ENCODE measurements at regions of chr3 and their contacts with region 1.

Region 1: DNA sequence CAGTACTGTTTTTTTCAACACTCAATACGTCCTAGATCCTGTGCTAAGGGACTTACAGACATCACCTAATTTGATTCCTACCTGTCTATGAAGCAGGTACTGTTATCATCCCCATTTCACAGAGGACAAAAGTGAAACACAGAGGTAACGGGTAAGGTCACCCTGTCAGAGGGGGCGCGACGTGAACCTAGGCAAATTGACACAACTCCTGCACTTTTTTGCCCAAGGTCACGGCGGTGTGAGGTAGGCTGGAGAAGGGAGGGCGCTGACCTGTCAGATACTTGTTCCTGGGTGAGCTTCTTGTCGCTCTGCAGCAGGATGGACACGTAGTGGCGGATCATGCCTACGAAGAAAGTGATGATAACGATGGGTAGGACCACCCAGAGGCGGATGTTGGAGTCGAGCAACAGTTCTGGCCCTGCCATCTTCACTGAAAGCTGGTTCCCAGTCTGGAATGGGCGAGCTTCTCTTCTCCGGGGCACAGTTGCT is 360 bp downstream of the EMC3 start:
- DNase-seq: no peak
- ATAC-seq: peak; percentile 31
- H3K4me3 Mint-ChIP-seq: peak overlapping the region; percentile 94
- H3K27ac Mint-ChIP-seq: peak overlapping the region; percentile 98
- H3K4me1 Mint-ChIP-seq: peaks cover 32% of the 10 kb centered on the region
- H3K27me3 Mint-ChIP-seq: no peaks in the 10 kb centered on the region

Region 2: GRCh38 chr3:8963137-8963869 is 1023.0 kb before region 1 on chr3 and contains the start of gene RAD18:
- CTCF ChIA-PET with region 1: no interaction called
- POLR2A ChIA-PET with region 1: no interaction called
- intact Hi-C with region 1: loop called in 1 of 2 experiments (anchors 2 kb)
- DNase-seq: peak; percentile 95
- ATAC-seq: peak; percentile 94
- H3K4me3 Mint-ChIP-seq: peak within 1 kb of the TSS; percentile 95
- H3K27ac Mint-ChIP-seq: peak within 1 kb of the TSS; percentile 93
- H3K4me1 Mint-ChIP-seq: peaks cover 32% of the 10 kb centered on the region
- H3K27me3 Mint-ChIP-seq: no peaks in the 10 kb centered on the region
- total RNA-seq, gene RAD18: 47.8 to 50.5 TPM

Region 3: GRCh38 chr3:9415485-9416138 is 570.7 kb before region 1 on chr3:
- CTCF ChIA-PET with region 1: no interaction called
- POLR2A ChIA-PET with region 1: no interaction called
- intact Hi-C with region 1: no loop called
- DNase-seq: no peak
- ATAC-seq: peak; percentile 16
- H3K4me3 Mint-ChIP-seq: no peak overlapping the region
- H3K27ac Mint-ChIP-seq: peak overlapping the region; percentile 44
- H3K4me1 Mint-ChIP-seq: peaks cover 52% of the 10 kb centered on the region
- H3K27me3 Mint-ChIP-seq: no peaks in the 10 kb centered on the region

Region 4: DNA sequence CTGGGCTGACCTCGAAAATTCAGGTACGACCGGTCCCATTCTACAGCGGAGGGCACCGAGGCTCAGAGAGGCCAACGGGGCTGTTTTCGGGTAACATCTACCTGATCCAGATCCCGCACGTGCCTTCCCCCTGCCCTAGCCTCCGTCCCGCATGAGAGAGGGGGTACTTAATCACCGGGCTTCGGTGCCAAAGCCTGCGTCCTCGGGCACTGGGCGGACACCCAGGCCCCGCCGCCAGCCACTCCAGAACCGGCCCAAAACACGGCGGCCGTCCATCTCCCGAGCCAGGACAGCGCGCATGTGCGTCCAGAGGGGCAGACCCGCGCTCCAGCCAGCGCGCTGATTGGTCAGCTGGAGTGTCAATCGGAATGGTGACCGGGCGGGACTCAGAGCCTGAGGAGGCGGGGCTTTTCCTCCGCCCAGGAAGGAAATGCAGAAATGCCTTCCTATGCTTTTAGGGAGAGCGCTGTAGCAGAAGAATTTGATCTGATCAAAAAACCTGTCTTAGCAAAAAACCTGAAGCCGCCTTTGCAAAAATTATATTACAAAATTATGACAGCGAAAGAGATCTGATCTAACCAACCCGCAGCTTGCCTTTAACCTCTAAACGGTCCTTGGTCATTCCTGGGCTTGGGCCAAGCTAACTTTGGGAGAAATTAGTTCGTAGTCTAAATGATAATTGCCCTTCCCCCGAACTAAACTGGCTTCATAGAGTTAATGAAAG is 142.4 kb before region 1 on chr3 and contains the start of gene RPUSD3:
- CTCF ChIA-PET with region 1: no interaction called
- POLR2A ChIA-PET with region 1: no interaction called
- intact Hi-C with region 1: loop called (anchors 1 to 2 kb)
- DNase-seq: peak; percentile 98
- ATAC-seq: peak; percentile 97
- H3K4me3 Mint-ChIP-seq: peak within 1 kb of the TSS; percentile 99
- H3K27ac Mint-ChIP-seq: peak within 1 kb of the TSS; percentile 96
- H3K4me1 Mint-ChIP-seq: peaks cover 28% of the 10 kb centered on the region
- H3K27me3 Mint-ChIP-seq: no peaks in the 10 kb centered on the region
- total RNA-seq, gene RPUSD3: 79.2 to 81.5 TPM

Region 5: GRCh38 chr3:10010486-10011465 is 24.5 kb after region 1 on chr3:
- CTCF ChIA-PET with region 1: no interaction called
- POLR2A ChIA-PET with region 1: interaction called, 3 read pairs
- intact Hi-C with region 1: loop called (anchors 2 kb)
- DNase-seq: peak; percentile 92
- ATAC-seq: peak; percentile 83
- H3K4me3 Mint-ChIP-seq: peak overlapping the region; percentile 22
- H3K27ac Mint-ChIP-seq: no peak overlapping the region
- H3K4me1 Mint-ChIP-seq: peaks cover 20% of the 10 kb centered on the region
- H3K27me3 Mint-ChIP-seq: peaks cover 6% of the 10 kb centered on the region

Region 6: GRCh38 chr3:10074666-10075065 is 88.4 kb after region 1 on chr3:
- CTCF ChIA-PET with region 1: no interaction called
- POLR2A ChIA-PET with region 1: no interaction called
- intact Hi-C with region 1: no loop called
- DNase-seq: no peak
- ATAC-seq: no peak
- H3K4me3 Mint-ChIP-seq: no peak overlapping the region
- H3K27ac Mint-ChIP-seq: no peak overlapping the region
- H3K4me1 Mint-ChIP-seq: no peaks in the 10 kb centered on the region
- H3K27me3 Mint-ChIP-seq: no peaks in the 10 kb centered on the region

Region 7: GRCh38 chr3:10224784-10225665 is 238.7 kb after region 1 on chr3:
- CTCF ChIA-PET with region 1: no interaction called
- POLR2A ChIA-PET with region 1: interaction called, 3 read pairs
- intact Hi-C with region 1: loop called in 1 of 2 experiments (anchors 10 kb)
- DNase-seq: peak; percentile 83
- ATAC-seq: peak; percentile 72
- H3K4me3 Mint-ChIP-seq: no peak overlapping the region
- H3K27ac Mint-ChIP-seq: peak overlapping the region; percentile 83
- H3K4me1 Mint-ChIP-seq: peaks cover 69% of the 10 kb centered on the region
- H3K27me3 Mint-ChIP-seq: no peaks in the 10 kb centered on the region

Measured in activated CD4-positive, alpha-beta T cell treated with anti-CD3 and anti-CD28 coated beads for 36 hours (primary cell).